Left ventricle myocardium inferior (tissue), 1 donor: ENCODE measurements at regions of chr12 and their contacts with region 1.

Region 1: DNA sequence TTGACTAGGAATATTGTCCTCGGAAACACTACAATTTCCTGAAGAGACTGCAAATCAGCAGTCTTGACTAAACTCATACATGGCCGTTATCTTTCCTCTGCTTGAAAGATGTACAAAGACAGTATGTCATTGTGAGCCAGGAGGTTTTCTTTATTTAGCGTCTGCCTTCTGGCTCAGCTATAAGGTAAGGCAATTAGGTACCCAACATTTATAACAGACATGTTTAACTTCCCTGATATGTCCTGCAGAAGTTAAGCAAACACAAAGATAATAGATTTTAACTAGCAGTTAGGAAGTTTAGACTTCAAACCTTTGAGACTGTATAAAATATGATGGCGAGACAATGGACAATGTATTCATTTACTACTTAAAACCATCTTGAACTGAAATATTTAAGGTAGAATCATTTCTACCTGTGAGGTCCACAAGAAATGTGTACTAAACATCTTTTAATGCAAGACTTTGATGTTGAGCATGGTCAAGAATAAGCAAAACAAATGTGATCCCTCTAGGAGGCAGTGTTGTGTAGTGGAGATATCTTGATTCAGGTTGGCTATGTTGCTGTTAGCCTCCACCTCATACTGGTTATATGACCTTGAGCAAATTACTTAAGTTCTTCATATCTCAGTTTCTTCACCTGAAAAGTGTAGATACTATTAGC is 96.2 kb upstream of the EEA1 start:
- DNase-seq: no peak
- H3K4me3 ChIP-seq: no peak overlapping the region
- H3K27ac ChIP-seq: no peak overlapping the region
- H3K4me1 ChIP-seq: peaks cover 47% of the 10 kb centered on the region
- H3K27me3 ChIP-seq: no peaks in the 10 kb centered on the region
- CTCF ChIP-seq: peak; percentile 55

Region 2: GRCh38 chr12:93080994-93081797 is 55.9 kb after region 1 on chr12:
- intact Hi-C with region 1: no loop called
- DNase-seq: no peak
- H3K4me3 ChIP-seq: no peak overlapping the region
- H3K27ac ChIP-seq: no peak overlapping the region
- H3K4me1 ChIP-seq: peaks cover 8% of the 10 kb centered on the region
- H3K27me3 ChIP-seq: no peaks in the 10 kb centered on the region
- CTCF ChIP-seq: no peak

Region 3: DNA sequence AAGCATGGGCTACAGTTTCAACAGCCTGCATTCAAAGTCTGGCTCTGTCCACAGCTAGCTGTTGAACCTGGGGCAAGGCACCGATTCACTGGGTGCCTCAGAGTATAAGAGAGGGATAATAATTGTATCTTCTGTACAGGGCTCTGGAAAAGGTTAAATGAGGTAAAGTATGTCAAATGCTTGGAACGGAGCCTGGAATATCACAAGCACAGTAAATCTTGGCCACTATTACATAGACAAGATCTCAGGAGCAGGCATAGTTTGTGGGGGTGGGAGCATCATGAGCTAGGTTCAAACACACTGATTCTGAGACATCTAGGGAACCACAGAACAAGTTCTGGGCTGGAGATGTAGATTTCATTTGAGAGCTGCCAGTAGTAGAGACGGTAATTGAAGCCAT is 148.8 kb after region 1 on chr12:
- intact Hi-C with region 1: loop called (anchors 10 kb)
- DNase-seq: no peak
- H3K4me3 ChIP-seq: no peak overlapping the region
- H3K27ac ChIP-seq: peak overlapping the region; percentile 87
- H3K4me1 ChIP-seq: peaks cover 62% of the 10 kb centered on the region
- H3K27me3 ChIP-seq: no peaks in the 10 kb centered on the region
- CTCF ChIP-seq: no peak